Heart right ventricle (tissue), 16 donors: ENCODE measurements at regions of chr3 and their contacts with region 1.

Region 1: DNA sequence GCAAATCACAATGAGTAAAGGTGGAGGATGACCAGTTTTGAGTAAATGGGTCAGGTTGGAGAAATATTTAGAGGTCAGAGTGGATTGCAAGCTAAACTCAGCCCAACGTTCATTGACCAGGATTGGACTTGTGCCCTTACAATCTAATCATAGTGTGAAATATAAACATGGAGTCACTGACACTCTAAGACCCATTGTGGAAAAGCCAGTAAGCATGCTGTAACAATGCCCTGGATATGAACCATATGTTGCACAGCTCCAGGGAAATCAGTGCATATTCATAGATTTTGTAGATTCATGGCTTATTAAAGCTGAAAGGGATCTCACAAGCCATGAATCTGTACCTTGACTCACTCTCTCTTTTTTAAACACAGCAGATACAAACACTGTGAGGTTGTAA is 660.2 kb upstream of the LMCD1 start:
- DNase-seq: no peak
- ATAC-seq: no peak
- H3K4me3 ChIP-seq: no peak overlapping the region
- H3K27ac ChIP-seq: no peak overlapping the region
- H3K4me1 ChIP-seq: no peaks in the 10 kb centered on the region
- H3K27me3 ChIP-seq: no peaks in the 10 kb centered on the region
- CTCF ChIP-seq: no peak

Region 2: DNA sequence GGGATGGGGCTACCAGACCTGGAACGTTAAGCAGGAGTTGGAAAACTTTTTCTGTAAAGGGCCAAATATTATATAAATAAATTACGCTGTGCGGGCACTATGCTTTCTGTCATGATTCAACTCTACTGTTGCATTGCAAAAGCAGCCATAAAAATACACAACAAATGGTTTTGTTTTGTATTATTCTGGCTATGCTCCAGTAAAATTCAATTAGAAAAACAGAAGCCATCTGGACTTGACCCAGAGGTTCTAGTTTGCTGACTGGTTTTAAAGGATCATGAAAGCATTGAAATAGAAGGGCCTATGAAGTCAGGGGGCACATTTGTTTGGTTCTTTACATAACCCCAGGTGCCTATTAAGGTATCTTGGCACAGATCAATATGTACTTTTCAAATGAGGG is 12.8 kb after region 1 on chr3:
- intact Hi-C with region 1: loop called in 1 of 10 experiments (anchors 1 kb)
- DNase-seq: no peak
- ATAC-seq: no peak
- H3K4me3 ChIP-seq: no peak overlapping the region
- H3K27ac ChIP-seq: no peak overlapping the region
- H3K4me1 ChIP-seq: no peaks in the 10 kb centered on the region
- H3K27me3 ChIP-seq: no peaks in the 10 kb centered on the region
- CTCF ChIP-seq: no peak

Region 3: DNA sequence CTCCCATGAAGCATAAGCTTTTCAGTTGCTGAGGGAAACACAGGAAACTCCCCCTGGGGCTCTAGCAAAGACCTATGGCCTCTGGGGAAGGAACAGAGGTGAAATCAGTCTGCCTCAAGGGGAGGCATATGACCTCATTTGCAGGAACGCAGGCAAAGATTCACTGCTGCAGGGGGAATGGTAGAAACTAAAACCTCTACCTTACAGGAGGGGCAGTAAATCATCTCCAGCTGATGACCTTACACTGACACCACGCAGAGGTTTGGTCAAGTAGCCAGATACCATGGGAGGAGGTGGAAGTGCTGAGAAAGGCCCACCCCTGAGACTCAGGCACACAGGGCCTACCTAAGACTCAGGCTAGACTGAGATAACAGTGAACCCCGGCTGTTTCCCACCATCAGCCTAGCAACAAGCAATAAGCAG is 1040.7 kb after region 1 on chr3:
- intact Hi-C with region 1: no loop called
- DNase-seq: no peak
- ATAC-seq: no peak
- H3K4me3 ChIP-seq: no peak overlapping the region
- H3K27ac ChIP-seq: no peak overlapping the region
- H3K4me1 ChIP-seq: peaks cover 0 to 3% (median 0%) of the 10 kb centered on the region in 9 donors
- H3K27me3 ChIP-seq: no peaks in the 10 kb centered on the region
- CTCF ChIP-seq: no peak